Panc1 (cell line): ENCODE measurements at regions of chr19 and their contacts with region 1.

Region 1: DNA sequence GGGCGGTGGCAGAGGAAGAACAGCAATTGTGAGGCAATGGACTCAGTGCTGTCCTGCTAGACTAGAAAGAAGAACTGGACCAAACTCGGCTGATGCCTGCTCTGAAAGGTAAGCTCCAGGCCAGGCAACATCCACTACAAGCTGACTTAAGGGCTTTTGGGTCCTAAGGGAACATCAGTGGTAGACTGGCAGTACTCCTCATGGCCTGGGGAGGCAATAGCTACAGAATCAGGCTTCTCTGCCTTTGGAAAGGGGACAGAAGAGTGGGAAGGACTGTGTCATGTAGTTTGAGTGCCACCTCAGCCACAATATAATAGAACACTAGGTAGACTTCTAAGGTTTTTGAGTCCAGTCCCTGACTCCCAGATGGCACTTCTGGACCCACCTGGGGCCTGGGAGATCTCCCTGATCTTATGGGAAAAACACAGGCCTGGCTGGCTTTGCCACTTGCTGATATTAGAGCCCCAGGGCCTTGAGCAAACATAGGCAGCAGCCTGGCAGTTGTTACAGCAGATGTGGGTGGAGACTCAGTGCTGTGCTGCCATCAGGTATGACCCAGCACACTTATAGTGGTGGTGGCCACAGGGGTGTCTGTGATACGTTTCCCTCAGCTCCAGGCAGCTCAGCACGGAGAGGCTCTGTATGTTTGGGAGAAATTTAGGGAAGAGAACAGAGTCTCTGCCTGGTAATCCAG is 9.2 kb upstream of the CLC start:
- DNase-seq: no peak
- ATAC-seq: peak; percentile 83
- H3K4me3 ChIP-seq: no peak overlapping the region
- H3K27ac ChIP-seq: no peak overlapping the region
- H3K4me1 ChIP-seq: no peaks in the 10 kb centered on the region
- H3K27me3 ChIP-seq: peaks cover 92% of the 10 kb centered on the region
- CTCF ChIP-seq: no peak

Region 2: DNA sequence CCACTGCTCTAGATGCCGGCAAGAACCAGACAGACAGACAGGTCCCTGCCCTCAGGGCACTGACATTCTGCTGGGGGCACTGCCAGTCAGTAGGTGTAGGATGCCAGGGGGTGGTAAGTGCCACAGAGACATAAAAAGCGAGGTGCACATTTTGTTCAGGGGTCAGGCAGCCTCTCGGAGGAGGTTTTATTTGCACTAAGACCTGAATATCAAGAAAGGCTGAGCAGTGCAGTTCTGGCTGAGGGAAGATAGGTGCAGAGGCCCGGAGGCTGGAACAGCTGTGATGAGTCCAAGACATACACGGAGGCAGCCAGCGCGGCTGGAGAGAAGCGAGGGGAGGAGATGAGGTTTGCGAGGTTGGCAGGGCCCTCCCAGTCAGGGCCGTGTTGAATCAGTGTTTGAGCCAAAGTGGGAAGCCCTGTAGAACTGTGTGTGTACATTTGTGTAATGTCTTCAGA is 586.6 kb before region 1 on chr19:
- CTCF ChIA-PET with region 1: no interaction called
- POLR2A ChIA-PET with region 1: no interaction called
- in situ Hi-C with region 1: no loop called
- intact Hi-C with region 1: no loop called
- DNase-seq: no peak
- ATAC-seq: peak; percentile 43
- H3K4me3 ChIP-seq: no peak overlapping the region
- H3K27ac ChIP-seq: no peak overlapping the region
- H3K4me1 ChIP-seq: peaks cover 48% of the 10 kb centered on the region
- H3K27me3 ChIP-seq: no peaks in the 10 kb centered on the region
- CTCF ChIP-seq: no peak

Region 3: DNA sequence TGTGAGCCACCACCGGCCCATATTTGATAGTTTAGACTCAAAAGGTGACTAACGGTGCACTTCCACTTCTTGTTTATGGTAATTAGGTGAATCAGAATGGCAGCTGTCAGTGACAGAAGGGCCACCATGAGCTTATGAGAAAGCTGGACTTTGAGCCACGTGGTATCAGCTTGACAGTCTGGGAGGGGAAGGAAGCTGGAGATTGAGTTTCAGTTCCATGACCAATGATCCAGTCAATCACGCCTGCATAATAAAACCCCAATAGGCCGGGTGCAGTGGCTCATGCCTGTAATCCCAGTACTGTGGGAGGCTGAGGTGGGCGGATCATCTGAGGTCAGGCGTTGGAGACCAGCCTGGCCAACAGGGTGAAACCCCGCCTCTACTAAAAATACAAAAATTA is 222.5 kb before region 1 on chr19:
- CTCF ChIA-PET with region 1: no interaction called
- POLR2A ChIA-PET with region 1: interaction called, 10 read pairs
- in situ Hi-C with region 1: no loop called
- intact Hi-C with region 1: no loop called
- DNase-seq: no peak
- ATAC-seq: peak; percentile 1; the same call in 1 of the 2 replicates
- H3K4me3 ChIP-seq: no peak overlapping the region
- H3K27ac ChIP-seq: no peak overlapping the region
- H3K4me1 ChIP-seq: peaks cover 3% of the 10 kb centered on the region; the same call in 1 of the 2 replicates
- H3K27me3 ChIP-seq: no peaks in the 10 kb centered on the region
- CTCF ChIP-seq: no peak

Region 4: GRCh38 chr19:39631178-39631577 is 115.8 kb before region 1 on chr19:
- CTCF ChIA-PET with region 1: no interaction called
- POLR2A ChIA-PET with region 1: no interaction called
- in situ Hi-C with region 1: no loop called
- intact Hi-C with region 1: no loop called
- DNase-seq: peak; percentile 56
- ATAC-seq: peak; percentile 47
- H3K4me3 ChIP-seq: no peak overlapping the region
- H3K27ac ChIP-seq: no peak overlapping the region
- H3K4me1 ChIP-seq: no peaks in the 10 kb centered on the region
- H3K27me3 ChIP-seq: peaks cover 60% of the 10 kb centered on the region
- CTCF ChIP-seq: no peak; the same call in 1 of the 2 replicates

Region 5: DNA sequence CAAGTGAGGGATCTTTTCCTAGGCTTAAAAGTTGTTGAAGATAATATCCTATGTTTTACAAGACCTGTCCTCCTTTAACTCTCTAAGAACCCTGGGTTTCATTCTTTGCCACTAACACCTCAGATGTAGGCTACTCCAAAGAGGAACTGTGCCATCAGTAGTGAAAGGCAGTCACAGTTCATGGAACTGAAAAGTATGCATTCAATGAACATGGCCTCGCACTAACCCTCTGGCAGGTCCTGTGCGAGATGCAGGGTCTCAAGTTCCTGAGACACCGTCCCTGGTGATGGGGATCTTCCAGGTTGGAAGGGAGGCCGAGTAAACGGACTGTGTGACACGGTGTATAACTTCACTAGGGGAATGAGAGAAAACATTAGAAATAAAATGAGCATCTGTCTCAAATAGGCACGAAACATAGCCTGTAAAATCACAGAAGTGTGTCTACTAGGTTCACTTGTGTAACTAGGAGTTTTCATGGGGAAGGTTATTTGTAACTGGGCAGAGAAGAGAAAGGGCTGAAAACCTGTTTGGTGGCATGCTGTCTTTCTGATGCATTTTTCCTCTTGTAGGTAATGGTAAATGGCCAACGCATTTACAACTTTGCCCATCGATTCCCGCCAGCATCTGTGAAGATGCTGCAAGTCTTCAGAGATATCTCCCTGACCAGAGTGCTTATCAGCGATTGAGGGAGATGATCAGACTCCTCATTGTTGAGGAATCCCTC is 38.2 kb before region 1 on chr19:
- CTCF ChIA-PET with region 1: no interaction called
- POLR2A ChIA-PET with region 1: no interaction called
- in situ Hi-C with region 1: no loop called
- intact Hi-C with region 1: no loop called
- DNase-seq: no peak
- ATAC-seq: no peak
- H3K4me3 ChIP-seq: no peak overlapping the region
- H3K27ac ChIP-seq: no peak overlapping the region
- H3K4me1 ChIP-seq: no peaks in the 10 kb centered on the region
- H3K27me3 ChIP-seq: peaks cover 76% of the 10 kb centered on the region
- CTCF ChIP-seq: no peak

Region 6: DNA sequence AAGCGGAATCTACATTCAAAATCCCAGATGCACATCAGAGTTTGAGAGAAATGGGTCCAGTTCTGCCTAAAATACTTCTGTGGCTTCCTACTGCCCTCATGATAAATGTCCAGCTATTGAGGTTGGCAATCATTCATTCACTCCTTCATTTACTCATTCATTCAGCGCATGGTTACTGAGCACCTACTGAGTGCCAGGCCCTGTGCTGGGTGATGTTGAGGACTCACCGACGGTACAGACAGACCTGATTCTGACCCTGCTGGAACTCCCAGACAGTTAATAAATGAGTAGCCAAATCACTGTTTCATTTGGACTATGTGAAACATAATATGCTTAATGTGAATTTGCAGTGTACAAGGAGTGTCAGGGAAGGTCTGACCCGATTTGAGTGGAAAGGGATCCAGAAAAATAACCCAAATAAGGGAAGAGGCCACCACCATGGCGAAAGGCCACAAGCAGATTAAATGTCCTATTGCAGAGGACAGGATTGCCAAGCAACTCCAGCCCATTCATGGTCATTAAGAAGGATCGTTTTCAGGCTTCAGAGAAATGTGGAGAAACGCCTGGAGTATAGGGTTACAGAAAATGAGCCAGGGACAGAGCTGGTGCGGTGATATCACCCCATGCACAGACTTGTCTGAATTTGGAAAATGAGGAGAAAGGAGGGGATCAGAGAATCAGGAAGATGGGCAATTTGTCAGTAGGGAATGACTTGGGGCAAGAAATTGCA is 66.4 kb after region 1 on chr19:
- CTCF ChIA-PET with region 1: no interaction called
- POLR2A ChIA-PET with region 1: no interaction called
- in situ Hi-C with region 1: no loop called
- intact Hi-C with region 1: no loop called
- DNase-seq: no peak
- ATAC-seq: peak; percentile 5; the same call in 1 of the 2 replicates
- H3K4me3 ChIP-seq: no peak overlapping the region
- H3K27ac ChIP-seq: no peak overlapping the region
- H3K4me1 ChIP-seq: no peaks in the 10 kb centered on the region
- H3K27me3 ChIP-seq: no peaks in the 10 kb centered on the region
- CTCF ChIP-seq: no peak

Region 7: GRCh38 chr19:39864118-39864517 is 117.1 kb after region 1 on chr19:
- CTCF ChIA-PET with region 1: no interaction called
- POLR2A ChIA-PET with region 1: no interaction called
- in situ Hi-C with region 1: loop called (anchors 10 kb)
- intact Hi-C with region 1: no loop called
- DNase-seq: no peak
- ATAC-seq: no peak
- H3K4me3 ChIP-seq: no peak overlapping the region
- H3K27ac ChIP-seq: no peak overlapping the region
- H3K4me1 ChIP-seq: peaks cover 4% of the 10 kb centered on the region
- H3K27me3 ChIP-seq: peaks cover 12% of the 10 kb centered on the region; the same call in 1 of the 2 replicates
- CTCF ChIP-seq: no peak

Region 8: GRCh38 chr19:39934584-39935363 is 187.8 kb after region 1 on chr19 and contains the start of gene FCGBP:
- CTCF ChIA-PET with region 1: no interaction called
- POLR2A ChIA-PET with region 1: interaction called, 14 read pairs
- in situ Hi-C with region 1: no loop called
- intact Hi-C with region 1: no loop called
- DNase-seq: no peak
- ATAC-seq: peak; percentile 31
- H3K4me3 ChIP-seq: no peak within 1 kb of the TSS
- H3K27ac ChIP-seq: no peak within 1 kb of the TSS
- H3K4me1 ChIP-seq: no peaks in the 10 kb centered on the region
- H3K27me3 ChIP-seq: peaks cover 30% of the 10 kb centered on the region
- CTCF ChIP-seq: no peak
- total RNA-seq, gene FCGBP: 6.4 TPM

Region 9: GRCh38 chr19:40294560-40294959 is 547.6 kb after region 1 on chr19:
- CTCF ChIA-PET with region 1: no interaction called
- POLR2A ChIA-PET with region 1: no interaction called
- in situ Hi-C with region 1: loop called (anchors 5 kb)
- intact Hi-C with region 1: no loop called
- DNase-seq: no peak
- ATAC-seq: peak; percentile 4
- H3K4me3 ChIP-seq: no peak overlapping the region
- H3K27ac ChIP-seq: no peak overlapping the region
- H3K4me1 ChIP-seq: no peaks in the 10 kb centered on the region
- H3K27me3 ChIP-seq: peaks cover 4% of the 10 kb centered on the region; the same call in 1 of the 2 replicates
- CTCF ChIP-seq: no peak